ENCODE measurements at regions of chrX and their contacts with region 1.

Region 1: DNA sequence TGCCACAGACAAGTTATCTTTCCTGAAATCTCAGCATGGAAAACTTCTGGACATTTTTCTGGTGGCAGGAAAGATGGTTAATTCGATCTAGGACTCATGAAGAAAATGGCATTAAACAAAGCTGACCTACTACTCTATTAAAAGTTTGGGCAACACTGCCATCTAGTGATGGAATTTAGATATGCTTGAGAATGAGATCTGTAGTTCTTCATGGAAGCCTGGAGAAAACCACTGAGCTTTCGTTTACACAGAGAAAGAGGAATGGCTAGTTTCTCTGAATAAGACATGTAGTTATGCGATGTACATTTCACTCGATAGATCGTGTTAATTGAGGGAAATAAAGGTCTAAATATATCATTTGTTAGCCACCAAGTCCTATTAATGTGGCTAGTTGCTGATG is 51.7 kb upstream of the CHRDL1 start:
- DNase-seq: no peak
- ATAC-seq: peak; percentile 44 to 76

Region 2: DNA sequence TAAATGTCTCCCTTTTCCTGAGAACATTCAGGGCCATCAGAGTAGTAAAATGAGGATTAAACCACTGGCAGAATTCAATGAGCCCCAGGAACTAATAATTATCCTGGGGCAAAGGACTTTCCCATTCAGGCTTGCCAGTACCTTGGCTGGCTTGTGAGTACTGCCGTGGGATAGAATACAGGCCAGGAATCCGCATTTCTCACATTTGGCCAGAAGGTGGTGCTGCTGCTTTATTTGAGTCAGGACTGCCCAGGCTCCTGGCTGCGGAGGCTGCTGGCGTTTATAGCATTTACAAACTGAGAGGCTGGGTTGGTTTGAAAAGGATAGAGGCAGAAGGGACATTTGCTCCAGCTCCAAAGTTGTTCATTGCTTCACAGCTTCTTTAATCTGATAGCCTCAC is 397.3 kb before region 1 on chrX:
- intact Hi-C with region 1: loop called (anchors 2 to 5 kb)
- DNase-seq: peak; percentile 69
- ATAC-seq: peak; percentile 84 to 93

Region 3: DNA sequence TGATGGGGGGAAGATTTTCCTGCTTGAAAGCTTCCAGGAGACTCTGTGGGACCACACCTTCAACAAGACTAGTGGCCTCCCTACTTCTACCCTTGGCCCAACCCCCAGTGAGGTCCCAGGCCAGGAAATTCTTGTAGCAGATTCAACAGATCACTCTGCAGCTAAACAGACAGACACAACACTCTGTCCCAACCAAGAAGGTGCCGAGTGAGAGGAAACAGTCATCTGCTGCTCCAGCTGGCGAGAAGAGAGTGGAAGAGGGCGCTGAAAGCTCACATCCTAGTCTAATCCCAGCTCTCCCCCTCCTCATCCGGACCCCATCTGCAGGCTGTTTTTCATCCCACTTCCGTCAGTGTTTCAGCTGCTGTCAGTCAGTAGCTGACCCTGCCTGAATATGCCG is 115.1 kb before region 1 on chrX:
- intact Hi-C with region 1: no loop called
- DNase-seq: no peak
- ATAC-seq: peak; percentile 56 to 88

Measured in left cardiac atrium (tissue), 4 donors.